ENCODE measurements at regions of chr1 and their contacts with region 1.

Region 1: DNA sequence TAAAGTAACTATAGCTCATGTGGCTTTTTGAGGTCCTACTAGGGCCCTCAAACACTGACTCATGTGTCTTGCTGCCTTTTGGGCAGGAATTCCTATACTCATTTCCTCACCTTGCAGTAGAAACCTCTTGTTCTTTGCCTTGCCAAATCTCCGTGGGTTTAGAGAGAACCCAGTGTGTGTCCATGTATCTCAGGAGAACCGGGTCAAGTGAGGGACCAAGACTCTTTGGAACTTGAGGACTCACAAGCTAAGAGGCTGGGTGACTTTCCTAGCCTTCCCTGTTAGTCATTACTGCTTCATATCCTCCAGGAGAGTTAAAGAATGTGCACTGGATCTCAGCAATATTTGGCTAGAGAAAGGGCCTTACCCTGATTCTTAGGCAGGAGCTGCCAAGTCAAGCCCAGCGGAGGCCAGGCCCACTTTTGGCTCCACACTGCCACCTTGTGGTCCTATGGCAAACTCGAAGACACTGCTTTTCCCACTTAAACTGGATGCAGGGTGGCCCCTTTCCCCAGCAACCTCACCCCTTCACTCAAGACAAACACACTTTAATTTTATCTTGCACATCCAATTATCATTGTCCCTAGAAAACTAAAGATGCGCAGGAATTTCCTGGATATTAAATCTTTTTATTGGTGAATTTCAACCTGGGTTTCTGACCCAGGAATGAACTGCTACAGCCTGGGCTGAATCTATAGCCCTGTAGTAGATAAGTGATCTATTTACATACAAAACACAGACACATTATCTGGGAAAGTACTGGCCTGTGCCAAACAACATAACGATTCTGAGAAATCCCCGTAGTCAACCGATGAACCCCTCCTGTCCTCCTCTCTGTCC is 10.6 kb downstream of the AVPR1B start:
- DNase-seq: peak; percentile 87
- CTCF ChIP-seq: peak; percentile 89

Region 2: GRCh38 chr1:205775015-205775716 is 331.4 kb before region 1 on chr1 and contains the start of gene RAB29:
- in situ Hi-C with region 1: loop called (anchors 25 kb)
- DNase-seq: peak; percentile 83
- CTCF ChIP-seq: no peak

Region 3: GRCh38 chr1:205983925-205984725 is 122.4 kb before region 1 on chr1:
- in situ Hi-C with region 1: loop called (anchors 10 kb)
- DNase-seq: peak; percentile 72
- CTCF ChIP-seq: peak; percentile 80

Region 4: GRCh38 chr1:206030714-206031113 is 75.8 kb before region 1 on chr1:
- in situ Hi-C with region 1: loop called (anchors 10 kb)
- DNase-seq: peak; percentile 64
- CTCF ChIP-seq: peak; percentile 88